Activated T-helper 1 cell treated with anti-CD3 and anti-CD28 coated beads, Interleukin-12 subunit alpha, Interleukin-12 subunit beta, Interleukin-2, Interleukin-4 antibody, amounts not matched to agents 30 ng/mL and 10 ng/mL and 1 ng/mL, durations not matched to agents 14 hours and 24 hours and 36 hours (primary cell): ENCODE measurements at regions of chr11 and their contacts with region 1.

Region 1: GRCh38 chr11:111926505-111927391 is 8.0 kb downstream of the C11orf52 start:
- DNase-seq: peak; percentile 93
- H3K4me3 Mint-ChIP-seq: peak overlapping the region; percentile 82
- H3K27ac Mint-ChIP-seq: peak overlapping the region; percentile 89
- H3K4me1 Mint-ChIP-seq: peaks cover 17% of the 10 kb centered on the region
- H3K27me3 Mint-ChIP-seq: peaks cover 18% of the 10 kb centered on the region

Region 2: DNA sequence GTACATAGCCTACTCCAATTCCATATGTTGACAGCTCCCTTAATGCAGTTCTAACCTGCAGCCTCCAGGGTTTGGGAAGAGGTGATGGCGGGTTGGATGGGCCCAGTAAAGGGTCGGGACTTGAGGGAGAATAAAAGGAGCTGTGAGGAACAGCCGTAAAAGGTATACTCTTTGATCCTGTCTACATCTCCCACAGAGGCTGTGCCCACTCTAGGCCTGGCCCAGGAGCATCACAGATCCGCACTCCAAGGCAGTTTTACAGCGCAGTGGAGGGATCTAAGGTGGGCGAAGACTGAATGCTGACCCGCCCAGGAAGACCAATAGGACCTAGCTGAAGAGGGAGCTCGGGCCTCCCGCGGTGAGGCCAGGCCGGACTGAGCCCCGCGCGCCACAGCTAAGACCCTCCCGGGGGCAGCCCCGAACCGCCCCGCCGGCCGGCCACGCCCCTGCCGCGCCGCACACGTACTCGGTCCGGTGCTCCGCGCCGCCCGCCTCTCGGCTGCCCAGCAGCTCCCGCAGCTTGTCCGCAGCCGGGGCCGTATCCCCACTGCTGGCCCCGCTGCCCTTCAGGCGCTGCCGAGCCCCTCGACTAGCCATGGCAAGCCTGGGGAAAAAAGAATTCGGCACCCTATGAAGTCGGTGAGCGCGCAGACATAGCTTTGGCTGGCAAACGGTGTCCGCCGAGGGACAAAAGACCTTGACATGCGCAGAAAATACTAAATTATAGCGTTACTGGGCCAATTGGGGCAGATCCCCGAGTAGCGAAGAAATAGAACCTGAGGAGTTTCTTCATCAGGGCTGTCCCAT is 55.7 kb before region 1 on chr11 and contains the start of gene ALG9:
- intact Hi-C with region 1: loop called (anchors 1 kb)
- DNase-seq: peak; percentile 85
- H3K4me3 Mint-ChIP-seq: peak within 1 kb of the TSS; percentile 89
- H3K27ac Mint-ChIP-seq: peak within 1 kb of the TSS; percentile 90
- H3K4me1 Mint-ChIP-seq: peaks cover 32% of the 10 kb centered on the region
- H3K27me3 Mint-ChIP-seq: no peaks in the 10 kb centered on the region
- total RNA-seq, gene ALG9: 29.3 and 31.8 TPM in 2 replicates

Region 3: GRCh38 chr11:111944651-111945051 is 17.9 kb after region 1 on chr11:
- intact Hi-C with region 1: loop called (anchors 2 kb)
- DNase-seq: no peak
- H3K4me3 Mint-ChIP-seq: no peak overlapping the region
- H3K27ac Mint-ChIP-seq: peak overlapping the region; percentile 92
- H3K4me1 Mint-ChIP-seq: peaks cover 32% of the 10 kb centered on the region
- H3K27me3 Mint-ChIP-seq: no peaks in the 10 kb centered on the region

Region 4: DNA sequence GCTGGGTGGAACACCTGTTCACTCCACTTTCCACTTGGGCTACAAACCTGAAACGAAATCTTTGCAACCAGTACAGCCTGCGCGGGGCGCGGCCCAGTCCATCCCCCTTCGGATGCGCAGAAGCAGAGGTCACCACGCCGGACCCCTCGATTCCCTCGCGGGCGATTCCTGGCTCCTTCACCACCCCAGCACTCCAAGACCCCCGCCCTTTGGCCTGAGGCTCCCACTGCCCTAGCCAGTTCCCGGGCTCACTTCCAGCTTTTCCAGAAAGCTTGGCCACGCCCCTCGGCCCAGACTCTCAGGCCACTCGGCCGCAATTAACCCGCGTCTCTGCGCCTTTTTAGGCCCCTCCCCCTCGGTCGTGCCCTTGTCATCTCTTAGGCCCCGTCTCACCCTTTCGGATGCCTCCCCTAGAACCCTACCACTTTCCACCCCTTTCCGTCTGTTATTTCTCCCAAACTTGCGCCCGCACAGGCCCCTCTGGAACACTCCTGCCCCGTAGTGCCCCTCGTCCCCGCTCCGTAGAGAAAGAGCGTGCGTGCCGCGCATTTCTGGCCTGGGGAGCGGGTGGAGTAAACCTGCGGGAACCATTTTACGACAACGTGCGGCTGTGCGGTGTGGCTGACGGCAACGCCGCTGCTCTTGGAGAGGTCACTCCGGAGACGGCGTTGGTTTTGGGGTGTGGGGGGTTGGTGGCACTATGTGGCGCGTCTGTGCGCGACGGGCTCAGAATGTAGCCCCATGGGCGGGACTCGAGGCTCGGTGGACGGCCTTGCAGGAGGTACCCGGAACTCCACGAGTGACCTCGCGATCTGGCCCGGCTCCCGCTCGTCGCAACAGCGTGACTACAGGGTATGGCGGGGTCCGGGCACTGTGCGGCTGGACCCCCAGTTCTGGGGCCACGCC is 98.3 kb after region 1 on chr11 and contains the start of gene DLAT:
- intact Hi-C with region 1: loop called (anchors 1 kb)
- DNase-seq: peak; percentile 80
- H3K4me3 Mint-ChIP-seq: peak within 1 kb of the TSS; percentile 95
- H3K27ac Mint-ChIP-seq: peak within 1 kb of the TSS; percentile 100
- H3K4me1 Mint-ChIP-seq: peaks cover 14% of the 10 kb centered on the region
- H3K27me3 Mint-ChIP-seq: no peaks in the 10 kb centered on the region
- total RNA-seq, gene DLAT: 52.0 and 54.5 TPM in 2 replicates

Region 5: GRCh38 chr11:112086422-112087191 is 159.9 kb after region 1 on chr11 and contains the starts of genes SDHD and TIMM8B:
- intact Hi-C with region 1: loop called (anchors 1 kb)
- DNase-seq: peak; percentile 96
- H3K4me3 Mint-ChIP-seq: peak within 1 kb of the TSS; percentile 99
- H3K27ac Mint-ChIP-seq: peak within 1 kb of the TSS; percentile 96
- H3K4me1 Mint-ChIP-seq: peaks cover 66% of the 10 kb centered on the region
- H3K27me3 Mint-ChIP-seq: no peaks in the 10 kb centered on the region
- total RNA-seq, gene SDHD: 95.4 and 98.0 TPM in 2 replicates
- total RNA-seq, gene TIMM8B: 85.6 and 89.2 TPM in 2 replicates

Region 6: DNA sequence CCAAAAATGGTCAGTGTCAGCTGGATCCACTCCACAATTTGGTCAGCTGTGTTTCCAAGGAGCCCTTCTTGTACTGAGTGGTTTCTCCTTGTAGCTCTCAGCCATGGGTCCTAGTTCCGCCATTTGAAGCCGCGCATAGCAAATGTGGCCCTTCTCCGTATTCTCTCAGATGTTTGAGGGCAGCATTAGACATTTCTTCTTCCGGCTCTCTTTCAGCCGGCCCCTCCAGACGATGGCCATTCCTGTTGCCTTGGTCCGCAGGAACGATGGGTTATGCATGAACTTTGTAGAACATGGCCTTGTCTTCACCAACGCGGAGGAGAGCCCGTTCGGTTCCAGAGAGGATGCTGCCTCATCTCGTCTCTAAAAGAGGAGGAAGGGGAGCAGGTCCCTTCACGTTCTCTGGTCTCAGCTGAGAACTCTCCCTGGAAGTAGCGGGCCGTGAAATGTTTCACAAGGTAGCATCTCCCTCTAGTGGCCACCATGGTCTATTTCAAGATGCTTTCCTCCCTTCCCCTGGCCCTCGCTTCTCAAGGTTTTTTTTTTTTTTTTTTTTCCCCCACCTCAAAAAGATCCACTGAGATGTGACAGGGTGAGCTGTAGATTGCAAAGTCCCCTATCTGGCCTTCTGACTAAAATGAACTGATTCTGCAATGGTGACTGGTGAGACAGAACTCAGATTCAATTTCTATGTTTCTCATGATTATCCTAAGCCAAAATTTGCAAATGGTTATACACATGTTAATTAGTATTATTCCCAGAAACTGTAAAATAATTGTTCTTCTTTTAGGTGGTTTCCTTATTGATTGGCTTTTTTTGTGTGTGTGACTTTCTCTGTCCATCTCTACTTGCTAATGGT is 353.7 kb after region 1 on chr11:
- intact Hi-C with region 1: loop called (anchors 2 kb)
- DNase-seq: peak; percentile 64
- H3K4me3 Mint-ChIP-seq: peak overlapping the region; percentile 85
- H3K27ac Mint-ChIP-seq: peak overlapping the region; percentile 77
- H3K4me1 Mint-ChIP-seq: peaks cover 39% of the 10 kb centered on the region
- H3K27me3 Mint-ChIP-seq: peaks cover 4% of the 10 kb centered on the region